Ovary (tissue), 10 donors: ENCODE measurements at regions of chr11 and their contacts with region 1.

Region 1: DNA sequence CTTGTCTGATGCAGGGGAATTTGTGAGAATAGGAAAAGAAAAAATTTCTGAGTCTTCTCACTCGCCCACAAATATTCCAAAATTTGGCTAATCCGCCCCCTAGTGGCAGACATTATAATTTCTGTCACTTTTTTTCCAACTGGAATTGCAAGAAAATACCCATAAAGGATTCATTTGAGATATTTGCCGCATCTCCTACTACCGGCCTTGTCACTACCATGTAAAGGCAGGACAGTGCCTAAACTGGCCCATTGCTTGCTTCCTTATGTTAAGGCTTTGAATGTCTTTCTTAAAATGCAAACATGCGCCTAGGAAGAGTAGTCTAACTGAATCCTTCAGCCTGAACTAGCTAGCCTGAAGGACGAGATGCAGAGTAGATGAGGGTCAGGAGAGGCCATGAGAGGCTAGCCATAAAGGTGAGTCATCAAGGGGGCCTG is 9.3 kb upstream of the CEP295 start:
- DNase-seq: no peak
- H3K4me3 ChIP-seq: no peak overlapping the region
- H3K27ac ChIP-seq: no peak overlapping the region
- H3K4me1 ChIP-seq: no peaks in the 10 kb centered on the region
- H3K27me3 ChIP-seq: no peaks in the 10 kb centered on the region
- CTCF ChIP-seq: peak in 2 of 3 donors; percentile 32 to 57
- EP300 ChIP-seq: no peak
- POLR2A ChIP-seq: no peak

Region 2: DNA sequence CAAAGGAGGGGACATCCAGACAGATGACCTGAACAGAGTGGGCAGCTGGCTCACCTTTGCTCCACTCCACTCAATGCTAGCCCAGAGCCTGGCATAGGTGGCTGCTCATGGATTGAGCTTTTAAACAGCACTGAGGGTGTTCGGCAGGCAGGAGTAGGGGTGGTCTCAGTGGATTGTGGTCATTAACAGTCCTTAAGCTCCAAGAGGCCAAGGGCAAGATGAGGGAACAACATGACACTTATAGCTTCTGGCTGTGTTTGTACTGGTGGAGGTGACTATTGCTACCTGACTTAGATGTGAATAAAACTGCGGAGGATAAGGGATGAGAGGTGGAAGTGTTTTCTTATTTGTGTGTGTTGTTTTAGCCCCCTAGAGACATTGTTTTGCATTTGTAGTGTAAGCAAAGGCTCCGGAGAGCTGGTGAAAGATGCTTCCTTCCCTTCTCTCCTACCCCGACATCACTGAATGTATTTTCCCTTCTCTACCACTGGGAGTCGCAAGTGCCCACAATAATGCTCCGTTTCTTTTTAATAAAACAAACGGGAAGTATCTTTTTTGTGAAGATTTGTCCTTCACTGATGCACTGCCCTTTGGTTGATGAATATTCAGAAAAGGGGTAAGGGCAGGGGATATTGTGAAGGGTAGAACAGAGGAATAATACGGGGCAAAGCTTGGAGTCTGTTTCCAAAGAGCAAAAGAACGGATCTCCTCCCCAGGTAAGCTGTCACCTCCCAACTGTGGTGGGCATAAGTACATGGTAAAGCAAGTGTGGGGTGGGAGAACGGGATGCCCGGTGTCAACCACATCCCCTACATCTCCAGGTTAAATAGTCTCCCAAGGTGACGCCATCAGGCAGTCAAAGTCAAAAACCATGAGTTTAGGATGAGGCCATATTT is 710.3 kb before region 1 on chr11:
- intact Hi-C with region 1: loop called in 1 of 4 experiments (anchors 10 kb)
- DNase-seq: no peak
- H3K4me3 ChIP-seq: no peak overlapping the region
- H3K27ac ChIP-seq: no peak overlapping the region
- H3K4me1 ChIP-seq: no peaks in the 10 kb centered on the region
- H3K27me3 ChIP-seq: no peaks in the 10 kb centered on the region
- CTCF ChIP-seq: peak in 1 of 3 donors; percentile 25
- EP300 ChIP-seq: no peak
- POLR2A ChIP-seq: no peak

Region 3: GRCh38 chr11:93234602-93235207 is 417.5 kb before region 1 on chr11:
- intact Hi-C with region 1: loop called (anchors 2 to 5 kb)
- DNase-seq: peak; percentile 60 to 79 (median 77)
- H3K4me3 ChIP-seq: no peak overlapping the region
- H3K27ac ChIP-seq: no peak overlapping the region
- H3K4me1 ChIP-seq: no peaks in the 10 kb centered on the region
- H3K27me3 ChIP-seq: no peaks in the 10 kb centered on the region
- CTCF ChIP-seq: peak; percentile 56 to 77 (median 64)
- EP300 ChIP-seq: no peak
- POLR2A ChIP-seq: no peak

Region 4: GRCh38 chr11:93543292-93543977 is 108.7 kb before region 1 on chr11 and contains the start of gene SMCO4:
- intact Hi-C with region 1: loop called in 2 of 4 experiments (anchors 10 kb)
- DNase-seq: peak; percentile 77 to 88 (median 83)
- H3K4me3 ChIP-seq: peak within 1 kb of the TSS; percentile 82
- H3K27ac ChIP-seq: peak within 1 kb of the TSS; percentile 81 to 86
- H3K4me1 ChIP-seq: peaks cover 5% of the 10 kb centered on the region
- H3K27me3 ChIP-seq: no peaks in the 10 kb centered on the region
- CTCF ChIP-seq: peak; percentile 63 to 71 (median 68)
- EP300 ChIP-seq: no peak
- POLR2A ChIP-seq: peak; percentile 24
- total RNA-seq, gene SMCO4: 10.8 to 26.5 (median 20.2) TPM

Region 5: GRCh38 chr11:93552874-93553273 is 99.3 kb before region 1 on chr11:
- intact Hi-C with region 1: loop called in 3 of 4 experiments (anchors 10 kb)
- DNase-seq: no peak
- H3K4me3 ChIP-seq: no peak overlapping the region
- H3K27ac ChIP-seq: no peak overlapping the region
- H3K4me1 ChIP-seq: no peaks in the 10 kb centered on the region
- H3K27me3 ChIP-seq: no peaks in the 10 kb centered on the region
- CTCF ChIP-seq: no peak
- EP300 ChIP-seq: no peak
- POLR2A ChIP-seq: no peak

Region 6: GRCh38 chr11:93727985-93728791 is 76.0 kb after region 1 on chr11:
- intact Hi-C with region 1: no loop called
- DNase-seq: no peak
- H3K4me3 ChIP-seq: no peak overlapping the region
- H3K27ac ChIP-seq: no peak overlapping the region
- H3K4me1 ChIP-seq: no peaks in the 10 kb centered on the region
- H3K27me3 ChIP-seq: no peaks in the 10 kb centered on the region
- CTCF ChIP-seq: no peak
- EP300 ChIP-seq: no peak
- POLR2A ChIP-seq: no peak

Region 7: GRCh38 chr11:93775289-93775688 is 123.1 kb after region 1 on chr11:
- intact Hi-C with region 1: no loop called
- DNase-seq: no peak
- H3K4me3 ChIP-seq: no peak overlapping the region
- H3K27ac ChIP-seq: no peak overlapping the region
- H3K4me1 ChIP-seq: no peaks in the 10 kb centered on the region
- H3K27me3 ChIP-seq: no peaks in the 10 kb centered on the region
- CTCF ChIP-seq: no peak
- EP300 ChIP-seq: no peak
- POLR2A ChIP-seq: no peak

Region 8: DNA sequence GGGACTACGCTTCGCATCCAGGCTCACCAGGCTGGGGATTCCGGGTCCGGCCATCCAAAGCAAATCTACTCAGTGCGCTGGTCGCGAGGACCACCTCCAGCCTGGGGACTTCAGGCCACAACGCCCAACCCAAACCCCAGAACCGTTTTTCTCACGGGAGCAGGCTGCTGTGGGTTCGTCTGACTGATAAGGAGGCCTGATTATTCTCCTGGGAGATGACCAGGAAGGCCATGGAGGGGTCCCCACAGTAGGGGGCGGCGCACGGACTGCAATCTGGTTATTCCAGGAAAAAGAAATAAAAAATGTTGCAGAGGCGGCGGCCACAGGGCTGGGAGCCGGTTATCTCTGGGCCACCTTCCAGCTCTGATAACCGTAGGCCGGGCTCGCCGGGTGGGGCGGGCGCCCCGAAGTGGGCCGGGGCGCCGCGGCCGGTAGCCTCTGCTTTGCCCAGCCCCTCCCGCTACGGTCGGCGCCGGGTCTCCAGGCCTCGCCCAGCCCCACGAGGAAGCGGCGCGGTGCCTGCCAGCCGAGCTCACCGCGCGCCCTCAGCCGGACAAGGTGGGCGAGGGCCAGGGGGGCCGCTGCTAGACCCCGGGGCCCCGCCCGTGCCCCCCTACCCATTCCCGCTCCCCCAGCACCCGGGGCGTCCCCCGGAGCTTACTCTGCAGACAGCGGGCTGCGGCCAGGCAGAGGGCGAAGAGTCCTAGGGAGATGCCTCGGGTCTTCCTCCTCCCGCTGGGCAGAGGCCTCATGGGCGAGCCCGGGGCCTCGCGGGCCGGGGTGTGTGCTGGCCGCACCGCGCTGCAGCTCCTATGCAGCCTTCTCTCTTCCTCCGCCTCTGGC is 197.8 kb after region 1 on chr11:
- intact Hi-C with region 1: no loop called
- DNase-seq: peak in 3 of 5 donors; percentile 11 to 39 (median 31)
- H3K4me3 ChIP-seq: peak overlapping the region; percentile 39
- H3K27ac ChIP-seq: no peak overlapping the region
- H3K4me1 ChIP-seq: no peaks in the 10 kb centered on the region
- H3K27me3 ChIP-seq: no peaks in the 10 kb centered on the region
- CTCF ChIP-seq: no peak
- EP300 ChIP-seq: no peak
- POLR2A ChIP-seq: no peak